GM12878 (cell line): ENCODE measurements at regions of chr1 and their contacts with region 1.

Region 1: DNA sequence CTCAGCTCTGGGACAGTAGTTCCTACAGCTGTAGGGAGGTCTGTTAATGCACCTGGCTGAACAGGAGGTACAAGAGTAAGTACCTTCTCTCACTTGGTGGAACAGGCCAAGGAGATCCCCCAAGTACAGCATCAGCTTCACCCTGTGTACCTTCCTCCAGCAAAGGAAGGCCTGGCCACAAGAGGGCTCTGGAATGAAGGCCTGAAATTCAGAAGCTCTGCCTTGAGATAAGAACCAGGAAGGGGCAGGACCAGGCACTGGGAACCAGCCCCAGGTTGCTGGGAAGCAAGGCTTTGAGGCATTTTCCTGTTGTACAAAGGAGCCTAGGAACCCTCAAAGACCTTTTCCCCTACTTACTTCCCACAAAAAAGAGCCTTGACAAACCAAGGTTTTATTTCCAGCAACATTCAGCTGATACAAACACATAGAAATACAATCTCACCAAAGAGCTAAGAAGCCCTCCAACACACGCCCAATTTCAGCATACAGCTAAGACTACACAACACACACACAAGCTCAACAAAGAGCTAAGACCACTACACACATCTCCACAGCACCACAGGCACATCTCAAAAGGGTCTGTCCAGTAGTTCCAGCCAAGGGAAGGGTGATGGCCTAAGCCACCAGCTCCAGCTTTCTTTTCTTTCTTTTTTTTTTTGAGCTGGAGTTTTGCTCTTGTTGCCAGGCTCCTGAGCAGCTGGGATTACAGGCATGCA is 23.5 kb downstream of the F11R start:
- DNase-seq: no peak
- ATAC-seq: peak; percentile 93
- H3K4me3 ChIP-seq: no peak overlapping the region
- H3K27ac ChIP-seq: peak overlapping the region; percentile 33; the same call in 1 of the 2 replicates
- H3K4me1 ChIP-seq: peaks cover 3% of the 10 kb centered on the region; the same call in 1 of the 2 replicates
- H3K27me3 ChIP-seq: no peaks in the 10 kb centered on the region
- CTCF ChIP-seq: peak; percentile 65 to 80 (median 72)
- EP300 ChIP-seq: no peak
- POLR2A ChIP-seq: no peak
- RAD21 ChIP-seq: peak; percentile 85

Region 2: DNA sequence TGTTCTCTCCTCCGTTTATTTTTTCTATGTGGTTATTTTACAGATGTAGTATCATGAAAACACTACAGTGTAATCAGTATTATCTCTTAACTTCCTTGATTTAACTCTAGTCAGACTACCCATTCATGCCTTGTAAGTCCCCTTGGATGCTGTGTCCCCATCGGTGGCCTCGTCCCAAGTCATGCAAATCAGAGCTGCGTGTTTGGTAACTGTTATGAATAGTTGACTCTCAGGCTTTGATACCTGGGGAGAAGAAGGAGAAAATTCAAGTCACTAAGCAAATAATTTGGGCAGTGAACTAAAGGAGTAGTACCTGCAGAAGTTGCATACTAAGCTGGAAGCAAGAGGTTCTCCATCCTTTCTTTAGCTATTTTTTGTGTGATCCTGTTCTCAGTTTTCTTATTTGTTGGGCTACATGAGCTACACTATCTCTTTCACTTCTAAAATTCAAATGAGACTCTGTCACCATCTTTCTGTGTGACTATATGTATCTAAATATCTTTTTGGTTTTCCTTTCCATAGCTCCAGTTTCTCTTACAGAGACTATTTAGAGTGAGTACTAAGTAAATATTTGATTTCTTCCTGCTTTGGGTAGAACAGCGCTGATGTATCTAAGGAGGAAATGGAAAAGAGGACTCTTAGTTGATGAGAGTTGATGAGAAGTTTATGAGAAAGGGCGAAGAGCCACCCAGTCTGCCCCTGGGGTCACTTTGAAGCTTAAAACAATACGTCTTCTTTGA is 546.2 kb before region 1 on chr1:
- CTCF ChIA-PET with region 1: no interaction called
- POLR2A ChIA-PET with region 1: no interaction called
- RAD21 ChIA-PET with region 1: no interaction called
- SMC1A ChIA-PET with region 1: no interaction called
- in situ Hi-C with region 1: no loop called
- intact Hi-C with region 1: no loop called
- DNase-seq: peak; percentile 44
- ATAC-seq: peak; percentile 43
- H3K4me3 ChIP-seq: 0 out of 2 replicates have a peak overlapping the region, but pooled peaks have one; percentile 2
- H3K27ac ChIP-seq: peak overlapping the region; percentile 82
- H3K4me1 ChIP-seq: peaks cover 47% of the 10 kb centered on the region
- H3K27me3 ChIP-seq: no peaks in the 10 kb centered on the region
- CTCF ChIP-seq: no peak
- EP300 ChIP-seq: no peak
- POLR2A ChIP-seq: no peak
- RAD21 ChIP-seq: no peak

Region 3: GRCh38 chr1:161021165-161021960 is 23.9 kb after region 1 on chr1:
- CTCF ChIA-PET with region 1: interaction called, 16 read pairs
- POLR2A ChIA-PET with region 1: interaction called, 3 read pairs
- RAD21 ChIA-PET with region 1: interaction called, 21 read pairs
- SMC1A ChIA-PET with region 1: interaction called, 18 read pairs
- in situ Hi-C with region 1: no loop called
- intact Hi-C with region 1: no loop called
- DNase-seq: peak; percentile 66
- ATAC-seq: peak; percentile 96
- H3K4me3 ChIP-seq: peak overlapping the region; percentile 75
- H3K27ac ChIP-seq: peak overlapping the region; percentile 33
- H3K4me1 ChIP-seq: peaks cover 19% of the 10 kb centered on the region
- H3K27me3 ChIP-seq: no peaks in the 10 kb centered on the region
- CTCF ChIP-seq: no peak
- EP300 ChIP-seq: no peak
- POLR2A ChIP-seq: peak; percentile 69; the same call in 1 of the 2 replicates
- RAD21 ChIP-seq: no peak

Region 4: GRCh38 chr1:161045750-161046571 is 48.5 kb after region 1 on chr1 and contains the start of gene USF1:
- CTCF ChIA-PET with region 1: interaction called, 57 read pairs
- POLR2A ChIA-PET with region 1: interaction called, 4 read pairs
- RAD21 ChIA-PET with region 1: interaction called, 16 read pairs
- SMC1A ChIA-PET with region 1: interaction called, 51 read pairs
- in situ Hi-C with region 1: no loop called
- intact Hi-C with region 1: loop called (anchors 5 kb)
- DNase-seq: peak; percentile 92
- ATAC-seq: peak; percentile 86
- H3K4me3 ChIP-seq: peak within 1 kb of the TSS; percentile 90
- H3K27ac ChIP-seq: peak within 1 kb of the TSS; percentile 100
- H3K4me1 ChIP-seq: peaks cover 15% of the 10 kb centered on the region
- H3K27me3 ChIP-seq: no peaks in the 10 kb centered on the region
- CTCF ChIP-seq: no peak
- EP300 ChIP-seq: no peak
- POLR2A ChIP-seq: peak; percentile 90
- RAD21 ChIP-seq: no peak
- polyA plus RNA-seq, gene USF1: 9.4 to 26.3 TPM

Region 5: DNA sequence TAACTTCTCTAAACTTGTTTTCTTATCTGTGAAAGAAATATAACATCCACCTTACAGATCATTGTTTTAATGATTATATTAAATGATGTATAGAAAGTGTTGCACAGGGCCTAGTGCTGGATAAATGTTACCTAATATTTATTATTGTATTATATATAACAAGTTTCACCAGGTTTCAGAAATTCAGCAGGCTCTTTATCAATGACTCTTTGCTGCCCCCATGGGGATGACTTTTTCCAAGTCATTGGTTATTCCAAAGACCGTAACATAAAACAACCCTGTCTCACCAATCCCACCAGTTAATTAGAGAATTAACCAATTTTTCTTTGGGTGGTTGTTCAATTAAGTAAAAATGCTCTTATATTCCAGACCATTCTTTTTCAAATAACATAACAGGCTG is 142.3 kb after region 1 on chr1:
- CTCF ChIA-PET with region 1: interaction called, 60 read pairs
- POLR2A ChIA-PET with region 1: no interaction called
- RAD21 ChIA-PET with region 1: interaction called, 15 read pairs
- SMC1A ChIA-PET with region 1: interaction called, 26 read pairs
- in situ Hi-C with region 1: no loop called
- intact Hi-C with region 1: loop called (anchors 1 kb)
- DNase-seq: no peak
- ATAC-seq: peak; percentile 74
- H3K4me3 ChIP-seq: no peak overlapping the region
- H3K27ac ChIP-seq: no peak overlapping the region
- H3K4me1 ChIP-seq: no peaks in the 10 kb centered on the region
- H3K27me3 ChIP-seq: no peaks in the 10 kb centered on the region
- CTCF ChIP-seq: peak; percentile 40 to 61 (median 44)
- EP300 ChIP-seq: no peak
- POLR2A ChIP-seq: no peak
- RAD21 ChIP-seq: peak; percentile 74